Left colon (tissue), 2 donors: ENCODE measurements at regions of chr12 and their contacts with region 1.

Region 1: DNA sequence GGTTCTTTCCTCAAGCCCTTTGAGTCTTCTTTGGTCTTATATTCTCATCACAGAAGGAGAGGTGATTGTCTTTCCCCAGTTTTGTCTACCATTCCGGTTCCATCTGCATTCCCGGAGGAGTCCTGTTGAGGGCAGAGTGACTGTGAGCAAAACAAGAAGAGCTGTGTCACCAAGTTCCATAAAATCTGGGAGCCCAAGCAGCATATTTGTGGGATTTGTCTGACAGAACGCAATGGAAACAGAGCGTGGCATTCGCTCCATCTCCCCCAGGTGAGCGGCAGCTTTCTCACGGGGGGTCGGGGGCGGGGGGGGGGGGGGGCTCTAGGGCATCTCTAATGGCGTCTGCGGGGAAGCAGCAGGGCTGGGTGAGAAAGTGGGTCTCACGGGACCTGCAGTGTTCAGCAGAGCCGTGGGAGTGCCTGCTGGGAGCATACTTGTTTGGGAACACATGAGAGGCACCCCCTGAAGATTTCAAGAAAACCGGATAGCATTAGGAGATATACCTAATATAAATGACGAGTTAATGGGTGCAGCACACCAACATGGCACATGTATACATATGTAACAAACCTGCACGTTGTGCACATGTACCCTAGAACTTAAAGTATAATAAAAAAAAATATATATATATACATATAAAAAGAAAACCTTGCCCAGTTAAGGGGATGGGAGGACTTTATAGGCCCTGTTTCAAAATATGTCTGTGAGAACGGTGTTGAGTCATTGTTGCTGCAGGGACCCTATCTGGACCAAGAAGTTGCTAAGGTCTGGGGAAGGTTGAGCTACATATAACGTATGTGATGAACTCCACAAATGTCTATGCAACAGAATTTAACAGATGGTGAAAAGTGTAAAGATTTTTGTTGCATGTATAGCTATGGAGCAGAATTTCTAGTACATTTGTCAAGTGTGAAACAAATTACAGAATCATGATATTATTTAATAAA is 59.4 kb downstream of the TBC1D30 start:
- DNase-seq: no peak
- ATAC-seq: no peak

Region 2: GRCh38 chr12:64814432-64814831 is 69.4 kb before region 1 on chr12:
- intact Hi-C with region 1: no loop called
- DNase-seq: no peak
- ATAC-seq: no peak

Region 3: DNA sequence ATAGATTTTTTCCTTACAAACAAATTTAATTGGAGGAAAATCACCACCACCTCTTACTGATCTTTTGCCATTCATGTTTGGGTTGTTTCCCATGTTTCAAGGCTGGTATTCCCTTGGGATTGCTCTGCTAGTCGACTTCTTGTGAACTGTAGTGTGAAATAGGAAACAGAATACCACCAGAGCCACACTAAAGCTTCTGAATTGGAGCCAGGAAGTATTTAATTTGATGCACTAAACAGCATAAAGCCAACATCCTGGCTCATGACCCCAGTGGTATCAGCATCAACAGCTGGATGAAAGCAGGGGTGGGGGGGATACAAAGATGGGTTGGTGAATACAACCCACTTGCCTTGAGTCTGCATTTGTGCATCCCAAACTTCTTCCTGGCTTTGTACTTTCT is 68.1 kb after region 1 on chr12:
- intact Hi-C with region 1: no loop called
- DNase-seq: no peak
- ATAC-seq: no peak

Region 4: GRCh38 chr12:65232476-65233077 is 348.7 kb after region 1 on chr12:
- intact Hi-C with region 1: loop called in 1 of 2 experiments (anchors 10 kb)
- DNase-seq: no peak
- ATAC-seq: no peak